ENCODE measurements at regions of chr10 and their contacts with region 1.

Region 1: GRCh38 chr10:68156373-68157185 is 47.3 kb downstream of the MYPN start:
- DNase-seq: no peak
- ATAC-seq: no peak

Region 2: DNA sequence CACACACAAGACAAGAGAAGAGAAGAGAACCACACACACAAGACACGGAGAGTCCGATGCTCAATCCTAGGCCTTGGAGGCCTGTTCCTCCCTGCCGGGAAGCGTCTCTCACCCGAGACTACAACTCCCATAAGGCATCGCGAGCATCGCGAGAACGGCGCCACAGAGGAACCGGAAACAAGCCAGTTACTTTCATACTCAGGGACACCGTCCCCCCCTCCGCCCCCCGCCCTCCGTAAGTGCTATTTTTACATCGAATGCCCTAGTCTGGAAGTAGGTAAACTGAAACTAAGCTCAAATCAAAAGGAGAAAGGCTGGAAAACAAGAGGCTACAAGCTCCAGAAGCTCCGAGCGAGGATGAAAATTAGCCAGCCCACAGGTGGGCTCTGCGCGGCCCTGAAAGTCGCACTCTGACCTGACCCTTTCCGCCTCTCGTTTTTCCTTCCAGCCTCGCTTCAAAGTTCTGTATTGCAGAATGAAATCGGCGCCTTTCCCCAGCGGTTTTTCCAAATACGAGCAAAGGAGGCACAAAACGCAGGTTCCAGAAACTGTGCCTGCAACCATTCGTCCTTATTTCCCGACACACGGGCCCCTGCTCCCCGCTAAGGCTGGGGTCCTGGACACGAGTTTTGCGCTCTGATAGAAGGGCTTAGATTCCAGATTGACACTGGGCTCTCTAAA is 307.1 kb before region 1 on chr10:
- intact Hi-C with region 1: loop called (anchors 2 kb)
- DNase-seq: peak; percentile 99
- ATAC-seq: peak; percentile 99

Region 3: GRCh38 chr10:68082872-68083271 is 73.7 kb before region 1 on chr10:
- intact Hi-C with region 1: loop called (anchors 1 kb)
- DNase-seq: no peak
- ATAC-seq: no peak

Region 4: DNA sequence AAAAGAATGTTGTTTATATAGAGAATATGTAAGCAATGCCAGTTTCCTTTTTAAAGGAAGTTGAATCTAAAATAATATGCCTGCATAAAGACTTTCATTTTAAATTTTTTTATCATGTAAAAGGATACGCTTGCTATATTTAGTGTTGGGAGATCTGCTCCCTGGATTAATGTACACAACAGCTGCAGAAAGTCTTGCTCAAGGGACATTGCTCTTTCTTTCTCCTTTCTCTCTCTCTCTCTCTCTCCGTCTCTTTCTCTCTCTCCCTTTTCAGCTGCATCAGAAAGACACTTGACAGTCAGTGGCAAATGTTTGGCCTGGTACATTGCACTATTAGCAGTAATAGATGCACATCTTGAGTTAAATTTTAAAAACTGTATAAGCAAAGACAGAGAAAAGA is 46.6 kb before region 1 on chr10:
- intact Hi-C with region 1: loop called (anchors 5 kb)
- DNase-seq: no peak
- ATAC-seq: peak; percentile 54

Region 5: DNA sequence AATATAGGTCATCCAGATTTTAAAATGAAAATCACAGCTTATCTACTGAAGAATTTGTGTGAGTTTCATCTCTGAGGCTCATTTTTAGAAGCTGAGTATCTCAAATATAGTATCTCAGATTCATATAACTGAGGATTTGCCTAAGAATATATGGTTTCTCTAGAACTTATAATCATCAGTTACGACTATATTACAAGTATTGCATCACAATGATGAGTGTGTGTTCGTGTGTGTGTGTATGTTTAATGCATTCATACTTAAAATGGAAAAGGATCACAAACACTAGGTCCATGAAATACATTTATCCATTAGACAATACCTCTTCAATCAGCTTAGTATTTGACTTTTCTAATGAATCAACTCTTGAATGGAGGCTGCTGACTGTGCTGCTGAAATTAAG is 229.2 kb after region 1 on chr10:
- intact Hi-C with region 1: no loop called
- DNase-seq: no peak
- ATAC-seq: no peak

Measured in Right ventricle myocardium inferior (tissue), 1 donor.